Activated CD4-positive, alpha-beta T cell treated with anti-CD3 and anti-CD28 coated beads for 36 hours (primary cell): ENCODE measurements at regions of chr10 and their contacts with region 1.

Region 1: GRCh38 chr10:43204943-43205671 is 61.8 kb downstream of the RASGEF1A start:
- DNase-seq: peak; percentile 84
- ATAC-seq: peak; percentile 76
- H3K4me3 Mint-ChIP-seq: no peak overlapping the region
- H3K27ac Mint-ChIP-seq: no peak overlapping the region
- H3K4me1 Mint-ChIP-seq: peaks cover 4% of the 10 kb centered on the region
- H3K27me3 Mint-ChIP-seq: no peaks in the 10 kb centered on the region

Region 2: GRCh38 chr10:43120929-43121314 is 84.2 kb before region 1 on chr10:
- CTCF ChIA-PET with region 1: interaction called, 5 read pairs
- POLR2A ChIA-PET with region 1: no interaction called
- intact Hi-C with region 1: loop called (anchors 5 kb)
- DNase-seq: peak; percentile 84
- ATAC-seq: peak; percentile 99
- H3K4me3 Mint-ChIP-seq: peak overlapping the region; percentile 16
- H3K27ac Mint-ChIP-seq: peak overlapping the region; percentile 82
- H3K4me1 Mint-ChIP-seq: peaks cover 19% of the 10 kb centered on the region
- H3K27me3 Mint-ChIP-seq: no peaks in the 10 kb centered on the region

Region 3: DNA sequence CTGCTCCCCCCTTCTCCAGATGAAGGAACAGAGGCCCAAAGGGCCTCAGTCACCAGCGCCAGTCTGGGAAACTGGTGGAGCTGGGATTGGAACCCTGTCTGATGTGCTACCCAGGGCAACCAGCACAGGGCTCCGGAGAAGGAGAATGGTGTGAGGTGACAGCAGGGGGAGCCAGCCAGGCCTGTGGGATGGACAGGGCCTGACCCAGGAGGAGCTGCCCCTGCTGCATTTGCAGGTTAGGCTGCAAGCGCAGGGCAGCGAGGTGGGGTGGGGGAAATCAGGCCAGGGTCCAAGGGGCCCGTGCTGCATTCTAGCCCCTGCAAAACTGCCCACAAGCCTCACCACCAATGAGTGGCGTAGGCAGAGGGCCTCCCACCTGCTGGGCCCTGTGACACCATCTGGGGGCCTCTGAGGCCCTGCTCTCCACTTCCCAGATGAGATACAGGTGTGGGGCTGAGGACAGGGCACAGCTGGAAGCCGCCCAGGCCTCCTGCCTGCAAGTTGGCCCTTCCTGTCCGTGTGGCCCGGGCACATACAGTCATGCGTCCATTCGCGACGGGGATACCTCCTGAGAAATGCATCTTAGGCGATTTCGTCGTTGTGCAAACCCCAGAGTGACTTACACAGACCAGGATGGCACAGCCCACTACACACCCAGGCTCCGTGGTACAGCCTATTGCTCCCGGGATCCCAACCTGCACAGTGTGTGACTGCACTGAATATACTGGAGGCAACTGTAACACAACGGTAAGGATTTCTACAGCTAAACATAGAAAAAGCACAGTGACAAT is 16.5 kb after region 1 on chr10:
- CTCF ChIA-PET with region 1: interaction called, 23 read pairs
- POLR2A ChIA-PET with region 1: no interaction called
- intact Hi-C with region 1: no loop called
- DNase-seq: peak; percentile 16
- ATAC-seq: peak; percentile 32
- H3K4me3 Mint-ChIP-seq: no peak overlapping the region
- H3K27ac Mint-ChIP-seq: no peak overlapping the region
- H3K4me1 Mint-ChIP-seq: peaks cover 18% of the 10 kb centered on the region
- H3K27me3 Mint-ChIP-seq: peaks cover 4% of the 10 kb centered on the region

Region 4: GRCh38 chr10:43348511-43349312 is 143.6 kb after region 1 on chr10:
- CTCF ChIA-PET with region 1: interaction called, 5 read pairs
- POLR2A ChIA-PET with region 1: no interaction called
- intact Hi-C with region 1: loop called (anchors 1 kb)
- DNase-seq: peak; percentile 92
- ATAC-seq: peak; percentile 100
- H3K4me3 Mint-ChIP-seq: no peak overlapping the region
- H3K27ac Mint-ChIP-seq: peak overlapping the region; percentile 45
- H3K4me1 Mint-ChIP-seq: peaks cover 15% of the 10 kb centered on the region
- H3K27me3 Mint-ChIP-seq: peaks cover 12% of the 10 kb centered on the region